Activated CD4-positive, alpha-beta memory T cell treated with anti-CD3 and anti-CD28 coated beads, Interleukin-2, amount 10 ng/mL, durations not matched to agents 7 days and 5 days (primary cell): ENCODE measurements at regions of chr10 and their contacts with region 1.

Region 1: DNA sequence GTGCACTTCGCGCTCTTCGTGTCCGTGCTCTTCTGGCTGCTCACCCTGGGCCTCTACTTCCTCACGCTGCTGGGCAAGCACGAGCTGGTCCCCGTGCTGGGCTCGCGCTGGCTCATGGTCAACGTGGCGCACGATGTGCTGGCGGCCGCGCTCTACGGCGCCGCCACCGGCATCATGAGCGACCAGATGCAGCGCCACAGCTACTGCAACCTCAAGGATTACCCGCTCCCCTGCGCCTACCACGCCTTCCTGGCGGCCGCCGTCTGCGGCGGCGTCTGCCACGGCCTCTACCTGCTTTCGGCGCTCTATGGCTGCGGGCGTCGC is 480 bp downstream of the MARVELD1 start:
- DNase-seq: peak; percentile 65
- H3K4me3 Mint-ChIP-seq: peak overlapping the region; percentile 97
- H3K27ac Mint-ChIP-seq: peak overlapping the region; percentile 60
- H3K4me1 Mint-ChIP-seq: peaks cover 18% of the 10 kb centered on the region
- H3K27me3 Mint-ChIP-seq: peaks cover 26% of the 10 kb centered on the region

Region 2: GRCh38 chr10:97553575-97554031 is 160.4 kb before region 1 on chr10:
- CTCF ChIA-PET with region 1: no interaction called
- POLR2A ChIA-PET with region 1: no interaction called
- DNase-seq: peak; percentile 66
- H3K4me3 Mint-ChIP-seq: no peak overlapping the region
- H3K27ac Mint-ChIP-seq: no peak overlapping the region
- H3K4me1 Mint-ChIP-seq: peaks cover 2% of the 10 kb centered on the region
- H3K27me3 Mint-ChIP-seq: no peaks in the 10 kb centered on the region

Region 3: GRCh38 chr10:97584060-97584797 is 129.8 kb before region 1 on chr10 and contains the start of gene HOGA1:
- CTCF ChIA-PET with region 1: no interaction called
- POLR2A ChIA-PET with region 1: no interaction called
- DNase-seq: no peak
- H3K4me3 Mint-ChIP-seq: no peak within 1 kb of the TSS
- H3K27ac Mint-ChIP-seq: no peak within 1 kb of the TSS
- H3K4me1 Mint-ChIP-seq: peaks cover 1% of the 10 kb centered on the region
- H3K27me3 Mint-ChIP-seq: peaks cover 2% of the 10 kb centered on the region
- total RNA-seq, gene HOGA1: not detected

Region 4: DNA sequence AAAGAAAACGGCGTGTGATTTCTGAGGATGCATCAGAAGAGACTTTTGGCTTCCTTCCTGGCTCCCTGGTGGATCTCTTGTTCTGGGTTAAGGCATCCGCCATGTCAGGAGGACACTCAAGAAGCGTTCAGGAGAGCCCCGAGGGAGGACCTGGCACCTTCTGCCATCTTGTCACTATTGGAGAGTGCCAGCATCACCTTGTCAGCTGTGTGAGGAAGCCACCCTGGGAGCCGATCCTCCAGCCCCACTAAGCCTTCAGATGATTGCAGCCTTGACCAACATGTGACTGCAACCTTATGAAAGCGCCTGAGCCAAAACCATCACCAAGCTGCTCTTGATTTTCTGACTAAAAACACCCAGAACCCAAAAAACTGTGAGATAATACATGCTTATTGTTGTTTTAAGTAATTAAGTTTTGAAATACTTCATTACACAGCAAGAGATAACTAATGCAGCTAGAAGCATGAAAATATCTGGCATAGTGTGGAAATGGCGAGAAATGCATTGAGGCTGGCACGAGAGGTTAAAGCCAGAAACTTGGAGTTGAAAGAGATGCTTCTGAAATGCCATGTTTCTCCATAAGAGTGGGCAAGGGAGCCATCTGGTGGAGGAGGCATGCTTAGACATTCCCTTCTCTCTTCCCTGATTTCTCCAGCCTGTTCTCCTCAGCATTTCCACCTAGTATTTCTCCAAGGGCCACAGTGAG is 17.5 kb after region 1 on chr10:
- CTCF ChIA-PET with region 1: interaction called, 111 read pairs
- POLR2A ChIA-PET with region 1: interaction called, 20 read pairs
- DNase-seq: peak; percentile 53
- H3K4me3 Mint-ChIP-seq: no peak overlapping the region
- H3K27ac Mint-ChIP-seq: no peak overlapping the region
- H3K4me1 Mint-ChIP-seq: peaks cover 16% of the 10 kb centered on the region
- H3K27me3 Mint-ChIP-seq: no peaks in the 10 kb centered on the region

Region 5: GRCh38 chr10:97759158-97759887 is 45.3 kb after region 1 on chr10:
- CTCF ChIA-PET with region 1: no interaction called
- POLR2A ChIA-PET with region 1: no interaction called
- DNase-seq: peak; percentile 50
- H3K4me3 Mint-ChIP-seq: no peak overlapping the region
- H3K27ac Mint-ChIP-seq: no peak overlapping the region
- H3K4me1 Mint-ChIP-seq: no peaks in the 10 kb centered on the region
- H3K27me3 Mint-ChIP-seq: no peaks in the 10 kb centered on the region

Region 6: DNA sequence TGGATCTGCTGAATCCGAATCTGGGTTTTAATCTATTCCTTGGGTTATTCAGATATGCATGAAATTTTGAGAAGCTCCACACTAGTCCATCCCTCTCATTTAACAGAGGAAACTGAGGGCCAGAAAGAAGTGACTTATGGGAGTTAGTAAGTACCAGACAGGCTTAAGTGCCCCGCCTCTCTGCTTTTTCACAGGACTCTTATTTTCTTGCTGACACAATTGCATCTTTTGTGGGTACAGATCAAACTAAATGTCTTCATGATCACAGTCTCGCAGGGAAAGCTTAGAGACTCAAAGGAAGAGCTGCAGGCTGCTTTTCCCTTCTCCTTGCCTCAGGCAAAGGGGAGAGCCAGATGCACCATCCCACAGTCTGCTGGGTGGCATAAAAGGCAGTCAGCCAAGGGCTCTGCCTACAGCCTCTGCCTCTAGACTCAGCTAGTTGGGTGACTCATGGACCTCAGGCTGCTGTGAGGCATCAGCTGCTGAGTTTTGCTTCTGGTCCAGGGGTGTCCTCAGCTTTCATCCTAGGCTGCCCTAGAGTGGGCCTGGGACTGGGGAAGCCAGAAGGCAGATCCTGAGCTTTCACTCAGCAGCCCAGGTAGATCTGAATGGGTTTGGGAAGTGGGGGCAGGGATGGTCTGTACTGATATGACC is 147.2 kb after region 1 on chr10:
- CTCF ChIA-PET with region 1: no interaction called
- POLR2A ChIA-PET with region 1: no interaction called
- DNase-seq: no peak
- H3K4me3 Mint-ChIP-seq: no peak overlapping the region
- H3K27ac Mint-ChIP-seq: no peak overlapping the region
- H3K4me1 Mint-ChIP-seq: peaks cover 37% of the 10 kb centered on the region
- H3K27me3 Mint-ChIP-seq: no peaks in the 10 kb centered on the region